A549 (cell line): ENCODE measurements at regions of chr3 and their contacts with region 1.

Region 1: GRCh38 chr3:111859974-111860859 is 1.2 kb downstream of the PHLDB2 start:
- DNase-seq: peak; percentile 88 to 90
- ATAC-seq: peak; percentile 83 to 86
- H3K4me3 ChIP-seq: peak overlapping the region; percentile 81
- H3K27ac ChIP-seq: peak overlapping the region; percentile 91 to 99
- H3K4me1 ChIP-seq: peaks cover 46% of the 10 kb centered on the region
- CTCF ChIP-seq: peak; percentile 61
- EP300 ChIP-seq: no peak
- POLR2A ChIP-seq: no peak; the same call in 1 of the 2 replicates
- RAD21 ChIP-seq: peak; percentile 81 to 93

Region 2: GRCh38 chr3:111737706-111738086 is 122.5 kb before region 1 on chr3:
- CTCF ChIA-PET with region 1: interaction called, 23 read pairs
- POLR2A ChIA-PET with region 1: interaction called, 15 read pairs
- DNase-seq: peak in 1 of 2 experiments; percentile 48
- ATAC-seq: no peak
- H3K4me3 ChIP-seq: no peak overlapping the region
- H3K27ac ChIP-seq: peak overlapping the region; percentile 76 to 90
- H3K4me1 ChIP-seq: peaks cover 83% of the 10 kb centered on the region
- CTCF ChIP-seq: no peak
- EP300 ChIP-seq: peak; percentile 20 to 37; a peak in 2 of 5 replicates
- POLR2A ChIP-seq: no peak
- RAD21 ChIP-seq: peak in 1 of 2 experiments; percentile 19; a peak in 1 of 5 replicates

Region 3: GRCh38 chr3:111803123-111803593 is 57.1 kb before region 1 on chr3:
- CTCF ChIA-PET with region 1: interaction called, 22 read pairs
- POLR2A ChIA-PET with region 1: interaction called, 53 read pairs
- DNase-seq: peak; percentile 43 to 93
- ATAC-seq: peak; percentile 93
- H3K4me3 ChIP-seq: no peak overlapping the region; the same call in 2 of the 3 replicates
- H3K27ac ChIP-seq: peak overlapping the region; percentile 89 to 97
- H3K4me1 ChIP-seq: peaks cover 59% of the 10 kb centered on the region
- CTCF ChIP-seq: no peak
- EP300 ChIP-seq: peak; percentile 50 to 81; a peak in 3 of 5 replicates
- POLR2A ChIP-seq: no peak
- RAD21 ChIP-seq: peak in 1 of 2 experiments; percentile 44; a peak in 3 of 5 replicates

Region 4: DNA sequence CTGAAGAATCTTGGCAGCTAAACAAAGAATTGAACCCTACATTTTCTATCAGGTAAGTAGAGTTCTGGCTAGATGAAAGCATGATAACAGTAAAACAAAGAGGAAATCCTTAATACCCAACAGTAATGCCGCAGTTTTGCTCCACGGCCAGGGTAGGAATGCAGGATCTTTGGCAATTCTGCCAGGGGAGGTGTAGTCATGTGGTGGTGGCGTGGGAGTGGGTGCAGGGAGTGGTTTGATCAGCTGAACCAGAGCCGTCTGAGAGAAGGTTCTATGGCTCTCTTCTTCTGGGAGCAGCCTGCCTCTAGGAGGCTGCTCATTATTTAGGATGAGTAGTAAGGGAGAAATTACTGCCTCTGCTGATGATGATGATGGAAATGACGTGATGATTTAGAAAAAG is 33.7 kb before region 1 on chr3:
- CTCF ChIA-PET with region 1: interaction called, 13 read pairs
- POLR2A ChIA-PET with region 1: no interaction called
- DNase-seq: no peak
- ATAC-seq: no peak
- H3K4me3 ChIP-seq: no peak overlapping the region
- H3K27ac ChIP-seq: no peak overlapping the region
- H3K4me1 ChIP-seq: no peaks in the 10 kb centered on the region; the same call in 2 of the 3 replicates
- CTCF ChIP-seq: no peak
- EP300 ChIP-seq: no peak
- POLR2A ChIP-seq: no peak
- RAD21 ChIP-seq: no peak

Region 5: DNA sequence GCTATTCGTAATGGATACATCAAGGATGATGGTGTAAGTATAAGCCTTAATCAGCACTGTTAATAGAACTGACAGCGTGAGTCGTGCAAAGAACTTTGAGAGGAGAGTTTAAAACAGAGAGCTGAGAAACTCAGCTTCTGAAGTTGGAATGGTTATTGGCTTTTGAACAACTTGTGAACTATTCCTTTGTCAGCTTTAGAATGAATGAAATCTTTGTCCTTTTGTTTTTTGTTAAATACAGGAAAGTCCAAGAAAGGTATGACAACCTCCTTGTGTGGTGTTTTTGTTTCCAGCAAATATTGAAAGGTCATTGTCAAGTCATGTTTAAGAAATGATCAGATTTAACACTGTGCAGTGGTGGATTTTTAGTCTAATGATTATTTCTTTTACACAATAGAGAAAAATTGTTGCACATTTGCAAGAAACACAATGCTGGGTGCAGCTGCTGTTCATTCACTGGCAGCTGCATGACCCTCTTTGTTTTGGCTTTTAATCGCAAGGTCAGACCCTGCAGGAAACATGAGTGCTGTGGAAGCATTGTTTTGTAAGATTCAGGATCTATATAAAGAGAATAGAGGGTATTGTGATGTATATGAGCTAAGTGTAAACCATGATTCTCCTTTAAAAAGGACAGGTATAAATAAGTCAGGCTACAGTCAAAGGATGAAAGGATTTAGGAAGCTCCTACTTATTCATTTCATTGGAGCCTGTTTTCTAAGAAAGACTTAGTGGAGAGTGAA is 96.9 kb after region 1 on chr3:
- CTCF ChIA-PET with region 1: interaction called, 11 read pairs
- POLR2A ChIA-PET with region 1: no interaction called
- DNase-seq: no peak
- ATAC-seq: no peak
- H3K4me3 ChIP-seq: no peak overlapping the region
- H3K27ac ChIP-seq: no peak overlapping the region
- H3K4me1 ChIP-seq: no peaks in the 10 kb centered on the region
- CTCF ChIP-seq: no peak
- EP300 ChIP-seq: no peak
- POLR2A ChIP-seq: no peak
- RAD21 ChIP-seq: no peak

Region 6: DNA sequence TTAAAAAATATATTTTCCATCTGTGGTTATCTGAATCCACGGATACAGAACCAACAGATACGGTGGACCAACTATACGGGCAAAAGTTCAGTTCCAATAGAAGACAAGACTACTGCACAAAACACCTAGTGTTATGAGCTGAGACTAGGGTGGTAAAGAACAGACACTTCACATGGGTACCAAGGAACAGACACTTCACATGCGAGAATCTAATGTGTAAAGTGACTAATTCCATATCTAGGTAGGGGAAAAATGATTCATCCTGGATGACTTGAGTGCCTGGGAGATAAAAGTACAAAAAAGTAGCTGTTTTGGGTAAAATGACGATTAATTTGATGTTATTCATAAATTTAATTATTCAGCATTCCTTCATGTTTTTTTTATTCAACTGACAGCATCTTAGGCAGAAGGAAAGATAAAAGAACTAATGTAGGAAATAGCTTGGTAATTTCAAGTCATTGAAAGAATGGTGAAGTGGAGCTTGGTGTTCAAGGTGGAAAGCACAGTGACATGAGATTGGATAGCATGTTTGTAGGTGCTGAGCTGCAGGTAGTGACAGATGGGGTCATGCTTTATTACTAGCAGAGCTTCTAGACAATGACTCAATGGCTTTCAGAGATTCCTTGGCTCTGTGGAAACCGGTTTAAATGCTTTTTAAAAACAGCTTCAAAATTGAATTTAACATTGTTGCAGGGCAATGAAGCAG is 478.0 kb after region 1 on chr3:
- CTCF ChIA-PET with region 1: no interaction called
- POLR2A ChIA-PET with region 1: no interaction called
- DNase-seq: no peak
- ATAC-seq: no peak
- H3K4me3 ChIP-seq: no peak overlapping the region
- H3K27ac ChIP-seq: no peak overlapping the region
- H3K4me1 ChIP-seq: no peaks in the 10 kb centered on the region
- CTCF ChIP-seq: no peak
- EP300 ChIP-seq: no peak
- POLR2A ChIP-seq: no peak
- RAD21 ChIP-seq: no peak